Mammary epithelial cell (primary cell): ENCODE measurements at regions of chr6 and their contacts with region 1.

Region 1: GRCh38 chr6:47413752-47414422 is 63.7 kb upstream of the CD2AP start:
- DNase-seq: peak; percentile 67
- H3K4me3 ChIP-seq: peak overlapping the region; percentile 43 to 45 (median 45)
- H3K27ac ChIP-seq: peak overlapping the region; percentile 61
- H3K4me1 ChIP-seq: peaks cover 5% of the 10 kb centered on the region
- H3K27me3 ChIP-seq: no peaks in the 10 kb centered on the region
- CTCF ChIP-seq: peak; percentile 88 to 96

Region 2: DNA sequence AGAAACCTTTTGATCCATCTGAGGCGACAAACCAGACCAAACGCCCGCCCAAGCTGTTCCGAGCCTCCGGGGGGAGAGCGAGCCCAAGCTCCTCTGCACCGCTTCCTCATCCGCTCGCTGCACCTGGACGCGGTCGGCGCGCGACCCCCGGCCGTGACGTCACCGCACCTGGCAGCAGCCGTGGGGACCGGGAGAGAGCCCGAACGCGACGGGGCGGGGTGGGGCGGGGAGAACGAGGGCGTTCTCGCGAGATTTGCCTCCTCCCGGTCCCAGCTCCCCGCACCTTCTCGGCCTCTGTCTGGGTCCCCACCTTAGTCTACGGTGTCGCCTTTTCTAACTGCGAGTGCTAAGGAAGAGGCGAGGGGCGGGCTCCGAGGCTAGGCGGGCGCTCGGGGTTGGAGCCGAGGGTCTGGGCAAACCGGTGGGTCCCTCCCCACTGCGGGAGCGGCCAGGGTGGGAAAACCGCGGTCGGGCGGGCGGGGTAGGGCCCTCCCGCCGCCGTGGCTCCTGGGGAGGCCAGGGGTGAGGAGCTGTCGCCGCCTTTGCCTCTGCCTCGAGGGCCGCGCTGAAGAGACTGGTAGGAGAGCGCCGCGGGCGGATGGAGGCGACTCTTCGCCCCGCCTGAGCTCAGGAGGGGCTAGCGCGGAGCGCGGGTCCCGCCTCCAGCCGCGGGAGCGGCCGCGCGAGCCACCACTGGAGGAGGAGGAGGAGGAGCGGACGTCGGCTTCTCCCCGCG is 63.8 kb after region 1 on chr6 and contains the start of gene CD2AP:
- CTCF ChIA-PET with region 1: no interaction called
- dilution Hi-C with region 1: no loop called
- in situ Hi-C with region 1: no loop called
- intact Hi-C with region 1: loop called (anchors 2 kb)
- DNase-seq: peak; percentile 86
- H3K4me3 ChIP-seq: peak within 1 kb of the TSS; percentile 68 to 94 (median 84)
- H3K27ac ChIP-seq: peak within 1 kb of the TSS; percentile 75
- H3K4me1 ChIP-seq: peaks cover 6% of the 10 kb centered on the region
- H3K27me3 ChIP-seq: no peaks in the 10 kb centered on the region
- CTCF ChIP-seq: no peak
- total RNA-seq, gene CD2AP: 20.0 to 28.1 TPM

Region 3: GRCh38 chr6:47603995-47604394 is 190.1 kb after region 1 on chr6:
- CTCF ChIA-PET with region 1: no interaction called
- dilution Hi-C with region 1: no loop called
- in situ Hi-C with region 1: loop called in 1 of 2 experiments (anchors 25 kb)
- intact Hi-C with region 1: no loop called
- DNase-seq: no peak
- H3K4me3 ChIP-seq: no peak overlapping the region
- H3K27ac ChIP-seq: no peak overlapping the region
- H3K4me1 ChIP-seq: no peaks in the 10 kb centered on the region
- H3K27me3 ChIP-seq: no peaks in the 10 kb centered on the region
- CTCF ChIP-seq: no peak

Region 4: DNA sequence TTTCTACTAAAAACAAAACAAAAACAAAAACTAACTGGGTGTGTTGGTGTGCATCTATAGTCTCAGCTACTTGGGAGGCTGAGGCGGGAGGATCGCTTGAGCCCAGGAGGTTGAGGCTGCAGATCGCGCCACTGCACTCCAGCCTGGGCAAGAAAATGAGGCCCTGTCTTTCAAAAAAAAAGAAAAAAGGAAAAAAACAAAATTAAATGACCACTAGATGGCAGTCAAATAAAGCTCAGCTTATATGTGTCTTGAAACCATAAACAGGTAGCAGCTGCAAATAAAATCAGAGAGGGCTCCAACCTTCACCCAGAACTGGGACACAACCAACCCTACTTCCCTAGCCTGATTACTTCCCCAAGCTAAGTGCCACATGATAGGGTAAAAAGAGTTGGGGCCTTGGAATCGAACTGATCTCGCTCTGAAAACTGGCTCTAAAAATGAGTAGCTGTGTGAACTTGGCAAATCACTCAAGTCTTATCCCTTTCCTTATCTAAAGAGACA is 217.4 kb after region 1 on chr6:
- CTCF ChIA-PET with region 1: no interaction called
- dilution Hi-C with region 1: no loop called
- in situ Hi-C with region 1: no loop called
- intact Hi-C with region 1: loop called (anchors 1 kb)
- DNase-seq: peak; percentile 60
- H3K4me3 ChIP-seq: no peak overlapping the region
- H3K27ac ChIP-seq: no peak overlapping the region
- H3K4me1 ChIP-seq: peaks cover 5% of the 10 kb centered on the region
- H3K27me3 ChIP-seq: no peaks in the 10 kb centered on the region
- CTCF ChIP-seq: peak; percentile 49 to 59

Region 5: DNA sequence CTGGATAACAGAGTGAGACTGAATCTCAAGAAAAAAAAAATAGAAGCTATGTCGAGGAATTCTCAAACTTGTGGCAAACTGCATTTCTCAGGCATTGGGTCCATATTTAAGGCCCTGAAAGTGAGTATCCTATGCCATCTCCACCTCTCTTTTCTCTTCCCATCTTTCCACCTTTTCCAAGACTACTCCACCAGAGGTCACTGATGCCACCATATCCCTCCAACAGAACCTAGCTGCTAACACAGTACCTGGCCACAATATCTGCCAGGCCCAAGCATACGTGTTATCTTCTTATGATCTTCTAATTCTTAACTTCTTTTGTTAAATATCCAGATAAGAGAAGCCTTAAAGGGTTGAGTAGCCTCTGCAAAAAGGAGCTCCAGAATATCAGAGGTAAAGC is 276.3 kb after region 1 on chr6:
- CTCF ChIA-PET with region 1: no interaction called
- dilution Hi-C with region 1: no loop called
- in situ Hi-C with region 1: no loop called
- intact Hi-C with region 1: loop called (anchors 1 kb)
- DNase-seq: no peak
- H3K4me3 ChIP-seq: no peak overlapping the region
- H3K27ac ChIP-seq: no peak overlapping the region
- H3K4me1 ChIP-seq: no peaks in the 10 kb centered on the region
- H3K27me3 ChIP-seq: no peaks in the 10 kb centered on the region
- CTCF ChIP-seq: peak in 1 of 2 donors; percentile 46

Region 6: DNA sequence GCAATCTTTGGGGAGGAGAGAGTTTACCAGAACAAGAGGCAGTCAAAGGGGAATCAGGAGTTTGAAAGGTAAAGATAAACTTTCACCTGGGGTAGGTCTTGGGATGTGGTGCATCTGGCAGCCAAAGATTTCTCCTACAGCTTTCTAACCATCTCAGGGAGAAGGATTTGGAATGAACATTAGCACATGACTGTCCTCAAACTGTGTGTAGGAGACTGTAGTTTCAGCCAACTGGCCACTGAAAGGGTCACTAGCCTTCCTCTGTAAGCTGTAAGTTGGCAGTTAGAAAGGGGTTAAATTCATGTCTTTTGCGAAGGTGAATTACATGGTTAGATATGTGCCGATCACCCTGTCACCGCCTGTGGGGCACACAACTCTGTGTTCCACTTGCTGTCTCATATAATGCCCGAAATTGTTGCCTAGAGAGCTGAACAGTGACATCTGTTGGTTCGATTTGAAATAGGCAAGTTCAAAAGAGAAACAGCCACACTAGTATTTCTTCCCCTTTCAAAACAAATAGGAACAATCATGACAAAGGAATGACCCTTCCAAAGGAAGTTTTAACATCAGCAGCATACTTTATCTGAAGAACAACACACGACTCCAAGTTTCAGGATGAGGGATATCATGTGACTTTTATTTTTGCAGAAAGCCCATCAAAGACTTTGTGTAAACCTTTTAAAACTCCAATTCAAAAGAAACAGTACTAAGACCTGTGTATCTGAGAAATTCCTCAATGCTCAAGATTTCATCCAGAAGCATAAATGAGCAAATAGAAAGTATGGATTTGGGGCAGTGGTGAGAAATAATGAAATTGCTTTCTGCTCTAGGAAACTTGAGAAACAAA is 366.8 kb after region 1 on chr6:
- CTCF ChIA-PET with region 1: no interaction called
- dilution Hi-C with region 1: no loop called
- in situ Hi-C with region 1: no loop called
- intact Hi-C with region 1: loop called (anchors 1 kb)
- DNase-seq: peak; percentile 73
- H3K4me3 ChIP-seq: no peak overlapping the region
- H3K27ac ChIP-seq: no peak overlapping the region
- H3K4me1 ChIP-seq: peaks cover 9% of the 10 kb centered on the region
- H3K27me3 ChIP-seq: no peaks in the 10 kb centered on the region
- CTCF ChIP-seq: peak; percentile 65 to 69